A673 (cell line): ENCODE measurements at regions of chr9 and their contacts with region 1.

Region 1: GRCh38 chr9:129776566-129776937 is 23.7 kb upstream of the PTGES start:
- DNase-seq: no peak
- H3K4me3 ChIP-seq: no peak overlapping the region
- H3K27ac ChIP-seq: no peak overlapping the region
- H3K4me1 ChIP-seq: no peaks in the 10 kb centered on the region
- H3K27me3 ChIP-seq: no peaks in the 10 kb centered on the region
- CTCF ChIP-seq: no peak

Region 2: DNA sequence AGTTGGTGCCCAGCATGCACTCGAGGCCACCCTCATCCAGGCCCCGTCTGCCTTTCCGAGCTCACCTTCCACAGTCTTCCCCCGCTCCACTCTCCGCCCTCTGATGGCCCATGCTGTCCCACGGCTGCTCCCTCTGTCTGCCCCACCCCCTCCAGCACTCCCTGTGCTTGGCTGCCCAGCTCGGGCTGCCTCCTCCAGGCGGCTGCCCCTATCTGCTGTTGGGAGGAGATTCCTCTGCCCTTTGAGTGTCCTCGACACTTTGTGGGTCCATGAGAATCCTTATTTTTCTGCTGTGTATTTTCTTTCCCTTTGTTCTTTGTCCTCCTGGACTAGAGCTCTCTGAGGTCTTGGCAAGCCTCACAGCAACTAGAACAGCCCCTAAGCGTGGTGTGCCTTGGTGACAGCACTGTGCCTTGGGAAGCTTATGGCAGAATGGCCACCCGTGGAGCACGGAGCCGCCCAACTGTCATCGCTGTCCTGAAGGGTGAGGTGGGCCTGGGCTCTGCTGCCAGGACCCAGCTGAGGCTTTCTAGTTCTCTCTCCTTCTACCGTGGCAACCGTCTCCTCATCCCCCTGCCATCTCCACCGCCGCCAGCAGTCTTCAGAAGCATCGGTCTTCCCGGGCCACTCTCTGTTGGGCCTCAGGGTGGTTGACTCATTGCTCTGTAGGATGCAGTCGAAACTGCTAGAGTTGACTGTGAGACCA is 145.4 kb before region 1 on chr9:
- CTCF ChIA-PET with region 1: no interaction called
- POLR2A ChIA-PET with region 1: no interaction called
- intact Hi-C with region 1: no loop called
- DNase-seq: no peak
- H3K4me3 ChIP-seq: no peak overlapping the region
- H3K27ac ChIP-seq: peak overlapping the region; percentile 58
- H3K4me1 ChIP-seq: peaks cover 40% of the 10 kb centered on the region
- H3K27me3 ChIP-seq: no peaks in the 10 kb centered on the region
- CTCF ChIP-seq: no peak

Region 3: DNA sequence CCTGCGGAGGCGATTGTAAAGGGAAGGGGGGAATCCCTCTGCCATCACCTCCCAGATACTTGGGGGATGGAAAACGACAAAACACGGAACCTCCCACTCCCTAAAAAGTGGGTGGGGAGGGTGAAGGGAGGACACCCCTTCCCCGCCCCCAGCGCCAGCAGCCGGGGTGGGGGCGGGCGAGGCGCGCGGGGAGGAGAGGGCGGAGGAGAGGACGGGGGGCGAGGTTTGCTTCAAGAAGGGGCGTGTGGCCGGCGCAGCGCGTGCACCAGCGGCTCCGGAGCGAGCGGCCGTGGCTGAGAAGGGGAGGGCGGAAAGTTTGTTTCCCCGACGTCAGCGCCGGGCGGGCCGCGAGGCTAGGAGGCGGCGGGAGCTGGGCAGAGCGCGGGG is 111.2 kb before region 1 on chr9 and contains the start of gene PRRX2:
- CTCF ChIA-PET with region 1: no interaction called
- POLR2A ChIA-PET with region 1: no interaction called
- intact Hi-C with region 1: no loop called
- DNase-seq: peak; percentile 88
- H3K4me3 ChIP-seq: peak within 1 kb of the TSS; percentile 54
- H3K27ac ChIP-seq: peak within 1 kb of the TSS; percentile 47
- H3K4me1 ChIP-seq: peaks cover 33% of the 10 kb centered on the region
- H3K27me3 ChIP-seq: no peaks in the 10 kb centered on the region
- CTCF ChIP-seq: no peak
- total RNA-seq, gene PRRX2: 12.7 and 16.6 TPM in 2 replicates

Region 4: GRCh38 chr9:129761901-129762364 is 14.6 kb before region 1 on chr9:
- CTCF ChIA-PET with region 1: no interaction called
- POLR2A ChIA-PET with region 1: interaction called, 10 read pairs
- intact Hi-C with region 1: no loop called
- DNase-seq: peak; percentile 33
- H3K4me3 ChIP-seq: no peak overlapping the region
- H3K27ac ChIP-seq: no peak overlapping the region
- H3K4me1 ChIP-seq: no peaks in the 10 kb centered on the region
- H3K27me3 ChIP-seq: no peaks in the 10 kb centered on the region
- CTCF ChIP-seq: no peak